ENCODE measurements at regions of chr2 and their contacts with region 1.

Region 1: DNA sequence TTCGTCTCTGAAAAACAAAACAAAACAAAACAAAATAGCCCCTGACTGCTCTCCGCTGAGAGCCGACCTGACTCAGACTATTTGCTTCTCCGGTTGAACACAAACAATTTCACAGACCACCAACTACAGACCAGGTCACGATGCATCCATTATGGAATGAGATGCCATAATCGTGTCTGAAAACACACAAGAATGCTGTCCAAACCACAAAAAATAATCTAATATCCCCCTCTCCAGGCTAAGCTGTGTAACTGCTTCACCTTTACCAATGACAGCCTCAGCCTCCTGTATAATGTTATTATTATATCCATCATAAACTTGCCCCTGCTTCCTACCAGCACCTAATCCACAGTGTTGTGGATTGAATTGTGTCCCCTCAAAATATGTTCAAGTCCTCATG is 114.7 kb downstream of the DNAH6 start:
- DNase-seq: no peak
- ATAC-seq: peak; percentile 70
- H3K4me3 ChIP-seq: no peak overlapping the region
- H3K27ac ChIP-seq: no peak overlapping the region
- H3K4me1 ChIP-seq: no peaks in the 10 kb centered on the region
- H3K27me3 ChIP-seq: no peaks in the 10 kb centered on the region
- CTCF ChIP-seq: peak in 2 of 3 experiments; percentile 50 to 52; a peak in 3 of 6 replicates
- EP300 ChIP-seq: no peak
- POLR2A ChIP-seq: no peak
- RAD21 ChIP-seq: peak; percentile 60

Region 2: GRCh38 chr2:84865181-84865783 is 234.2 kb after region 1 on chr2:
- CTCF ChIA-PET with region 1: no interaction called
- POLR2A ChIA-PET with region 1: no interaction called
- RAD21 ChIA-PET with region 1: no interaction called
- SMC1A ChIA-PET with region 1: no interaction called
- in situ Hi-C with region 1: no loop called
- intact Hi-C with region 1: loop called (anchors 5 kb)
- DNase-seq: no peak
- ATAC-seq: peak; percentile 87
- H3K4me3 ChIP-seq: no peak overlapping the region
- H3K27ac ChIP-seq: no peak overlapping the region
- H3K4me1 ChIP-seq: no peaks in the 10 kb centered on the region
- H3K27me3 ChIP-seq: no peaks in the 10 kb centered on the region
- CTCF ChIP-seq: peak; percentile 41 to 75 (median 61); a peak in 4 of 6 replicates
- EP300 ChIP-seq: no peak
- POLR2A ChIP-seq: no peak
- RAD21 ChIP-seq: peak; percentile 73

Measured in GM12878 (cell line).